WTC11 (cell line): ENCODE measurements at regions of chr17 and their contacts with region 1.

Region 1: DNA sequence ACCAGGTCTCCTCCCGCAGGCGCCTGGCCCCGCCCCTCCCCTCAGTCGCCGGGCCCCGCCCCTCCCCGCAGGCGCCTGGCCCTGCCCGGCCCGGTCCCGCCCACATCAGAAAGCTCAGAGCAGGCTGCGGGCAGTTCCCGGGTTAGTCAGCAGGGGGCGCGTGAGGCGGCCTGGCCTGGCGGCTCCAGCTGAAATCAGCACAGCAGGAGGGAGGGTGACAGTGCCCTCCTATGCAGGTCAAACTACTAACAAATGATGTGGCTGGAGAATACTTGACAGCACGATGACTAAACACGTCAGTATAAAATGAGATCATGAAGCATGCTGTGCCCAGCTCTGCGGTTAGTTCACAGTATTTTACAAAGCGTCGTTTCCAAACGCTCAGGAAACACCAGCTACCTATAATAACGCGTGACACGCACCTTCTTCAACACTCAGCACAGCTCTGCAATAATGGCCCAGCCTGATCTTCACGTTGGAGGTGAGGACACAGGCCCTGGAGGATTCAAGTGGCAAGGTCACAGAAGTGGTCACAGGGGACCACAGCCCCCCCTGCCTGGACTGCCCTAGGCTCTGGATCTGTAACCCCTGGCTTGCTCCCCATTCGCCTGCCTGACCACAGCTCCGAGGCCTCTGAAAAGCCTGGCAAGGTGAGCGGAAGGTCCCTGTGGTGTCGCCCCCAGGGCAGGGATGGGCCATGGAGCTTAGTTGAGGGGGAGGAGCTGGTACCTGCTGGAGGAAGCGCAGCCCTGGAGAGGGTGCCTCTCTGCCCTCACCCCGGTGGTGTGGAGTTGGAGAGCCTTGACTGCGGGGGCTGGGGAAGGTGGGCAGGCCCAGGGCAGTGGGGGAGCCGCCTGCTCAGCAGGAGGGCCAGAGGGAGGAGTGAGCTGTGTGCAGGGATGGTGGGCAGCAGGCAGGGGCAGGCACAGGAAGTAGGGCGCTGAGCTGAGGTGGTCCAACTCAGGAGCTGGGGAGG is 81.2 kb downstream of the KCNJ12 start:
- DNase-seq: peak; percentile 94
- ATAC-seq: peak; percentile 85
- H3K4me3 Mint-ChIP-seq: peak overlapping the region; percentile 53
- H3K27ac Mint-ChIP-seq: peak overlapping the region; percentile 56; the same call in 1 of the 2 replicates
- H3K4me1 Mint-ChIP-seq: peaks cover 25% of the 10 kb centered on the region
- H3K27me3 Mint-ChIP-seq: peaks cover 50% of the 10 kb centered on the region
- CTCF ChIP-seq: peak; percentile 91

Region 2: GRCh38 chr17:21031756-21032396 is 425.5 kb before region 1 on chr17:
- CTCF ChIA-PET with region 1: interaction called, 12 read pairs
- POLR2A ChIA-PET with region 1: no interaction called
- DNase-seq: no peak
- ATAC-seq: no peak
- H3K4me3 Mint-ChIP-seq: no peak overlapping the region
- H3K27ac Mint-ChIP-seq: peak overlapping the region; percentile 69
- H3K4me1 Mint-ChIP-seq: peaks cover 75% of the 10 kb centered on the region
- H3K27me3 Mint-ChIP-seq: no peaks in the 10 kb centered on the region
- CTCF ChIP-seq: no peak

Region 3: DNA sequence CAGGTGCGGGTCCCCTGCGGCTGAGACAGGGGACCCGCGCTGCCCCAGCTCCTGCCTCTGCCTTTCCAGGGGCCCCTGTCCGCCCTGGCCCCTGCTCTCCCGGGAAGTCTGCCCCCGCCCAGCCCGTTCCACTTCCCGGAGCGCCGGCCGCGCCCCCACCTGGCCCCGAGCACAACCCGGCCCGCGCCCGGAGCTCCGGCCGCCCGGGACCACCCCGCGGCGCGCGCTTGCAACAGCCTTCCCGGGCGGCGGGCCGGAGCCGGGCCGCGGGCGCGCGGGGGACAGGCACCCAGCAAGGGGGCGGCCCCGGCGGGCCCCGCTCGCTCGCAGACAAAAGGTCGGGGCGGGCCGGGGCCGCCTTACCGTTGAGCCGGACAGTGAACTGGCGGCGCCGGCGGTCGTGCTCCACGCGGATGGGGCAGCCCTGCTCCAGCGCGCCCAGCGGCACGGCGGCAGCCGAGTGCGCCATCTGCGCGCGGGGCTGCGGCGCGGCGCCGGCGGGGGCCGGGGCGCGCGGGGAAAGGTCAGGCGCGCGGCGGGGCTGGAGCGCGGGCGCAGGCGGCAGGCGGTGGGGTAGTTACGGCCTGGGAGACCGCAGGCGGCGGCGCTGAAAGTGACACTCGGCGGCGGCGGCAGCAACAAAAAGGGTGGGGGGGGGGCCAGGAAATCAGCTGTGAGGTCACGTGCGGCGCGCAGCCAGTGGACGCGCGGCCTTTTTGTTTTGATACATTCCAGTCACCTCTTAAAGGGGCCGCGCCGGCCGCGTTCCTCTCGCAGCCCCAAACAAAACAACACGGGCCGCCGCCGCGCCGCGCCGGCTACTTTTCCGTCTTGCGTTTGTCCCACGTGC is 204.3 kb before region 1 on chr17 and contains the start of gene NATD1:
- CTCF ChIA-PET with region 1: no interaction called
- POLR2A ChIA-PET with region 1: no interaction called
- DNase-seq: peak; percentile 78
- ATAC-seq: peak; percentile 51
- H3K4me3 Mint-ChIP-seq: peak within 1 kb of the TSS; percentile 76
- H3K27ac Mint-ChIP-seq: no peak within 1 kb of the TSS; the same call in 1 of the 2 replicates
- H3K4me1 Mint-ChIP-seq: peaks cover 30% of the 10 kb centered on the region
- H3K27me3 Mint-ChIP-seq: peaks cover 8% of the 10 kb centered on the region; the same call in 1 of the 2 replicates
- CTCF ChIP-seq: no peak
- total RNA-seq, gene NATD1: 10.1 to 11.2 TPM (median 11.1 TPM) in 3 replicates

Region 4: GRCh38 chr17:21376759-21377690 is 80.3 kb before region 1 on chr17:
- CTCF ChIA-PET with region 1: interaction called, 18 read pairs
- POLR2A ChIA-PET with region 1: no interaction called
- DNase-seq: peak; percentile 41
- ATAC-seq: peak; percentile 6
- H3K4me3 Mint-ChIP-seq: peak overlapping the region; percentile 76
- H3K27ac Mint-ChIP-seq: no peak overlapping the region
- H3K4me1 Mint-ChIP-seq: peaks cover 18% of the 10 kb centered on the region
- H3K27me3 Mint-ChIP-seq: peaks cover 46% of the 10 kb centered on the region
- CTCF ChIP-seq: no peak

Region 5: GRCh38 chr17:21397341-21398190 is 59.8 kb before region 1 on chr17:
- CTCF ChIA-PET with region 1: no interaction called
- POLR2A ChIA-PET with region 1: no interaction called
- DNase-seq: no peak
- ATAC-seq: no peak
- H3K4me3 Mint-ChIP-seq: no peak overlapping the region
- H3K27ac Mint-ChIP-seq: no peak overlapping the region
- H3K4me1 Mint-ChIP-seq: peaks cover 18% of the 10 kb centered on the region
- H3K27me3 Mint-ChIP-seq: no peaks in the 10 kb centered on the region; the same call in 1 of the 2 replicates
- CTCF ChIP-seq: no peak

Region 6: DNA sequence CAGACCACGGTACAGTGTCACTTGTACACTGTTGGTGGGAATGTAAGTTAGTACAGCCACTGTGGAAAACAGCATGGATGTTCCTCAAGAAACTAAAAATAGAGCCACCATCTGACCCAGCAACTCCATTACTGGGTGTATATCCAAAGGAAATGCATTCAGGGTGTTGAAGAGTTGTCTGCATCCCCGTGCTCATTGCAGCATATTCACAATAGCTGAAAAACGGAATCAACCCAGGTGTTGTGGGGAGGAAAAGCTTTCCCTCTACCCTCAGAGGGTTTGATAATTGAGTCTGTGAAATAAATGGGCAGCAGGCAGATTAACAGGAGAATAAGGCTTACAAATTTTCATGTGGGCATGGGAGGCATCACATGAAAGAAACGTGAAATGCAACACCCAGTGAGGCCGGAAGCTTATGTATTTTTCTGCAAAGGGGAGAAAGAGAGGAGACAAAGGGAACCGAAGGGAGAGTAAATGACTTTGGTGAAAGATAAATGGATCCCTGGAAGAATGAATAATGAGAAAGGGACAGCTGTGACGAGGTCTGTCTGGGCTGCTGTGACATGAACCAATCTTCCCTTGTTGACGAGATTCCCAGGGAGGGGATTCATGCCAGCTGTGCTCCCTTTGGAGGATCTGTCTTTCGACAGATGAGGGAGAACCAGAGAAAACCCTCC is 25.0 kb after region 1 on chr17:
- CTCF ChIA-PET with region 1: interaction called, 31 read pairs
- POLR2A ChIA-PET with region 1: no interaction called
- DNase-seq: no peak
- ATAC-seq: no peak
- H3K4me3 Mint-ChIP-seq: no peak overlapping the region
- H3K27ac Mint-ChIP-seq: no peak overlapping the region
- H3K4me1 Mint-ChIP-seq: peaks cover 25% of the 10 kb centered on the region
- H3K27me3 Mint-ChIP-seq: peaks cover 4% of the 10 kb centered on the region; the same call in 1 of the 2 replicates
- CTCF ChIP-seq: no peak

Region 7: GRCh38 chr17:21511363-21512198 is 54.2 kb after region 1 on chr17:
- CTCF ChIA-PET with region 1: interaction called, 189 read pairs
- POLR2A ChIA-PET with region 1: interaction called, 9 read pairs
- DNase-seq: peak; percentile 90
- ATAC-seq: peak; percentile 91
- H3K4me3 Mint-ChIP-seq: peak overlapping the region; percentile 76
- H3K27ac Mint-ChIP-seq: no peak overlapping the region
- H3K4me1 Mint-ChIP-seq: peaks cover 28% of the 10 kb centered on the region
- H3K27me3 Mint-ChIP-seq: peaks cover 30% of the 10 kb centered on the region
- CTCF ChIP-seq: peak; percentile 44; the same call in 1 of the 2 replicates